HEK293 (cell line): ENCODE measurements at regions of chr5 and their contacts with region 1.

Region 1: GRCh38 chr5:140647042-140647341 is 438 bp downstream of the NDUFA2 start:
- H3K4me3 ChIP-seq: peak overlapping the region; percentile 80
- H3K27ac ChIP-seq: peak overlapping the region; percentile 60; the same call in 1 of the 2 replicates
- H3K4me1 ChIP-seq: peaks cover 2% of the 10 kb centered on the region; the same call in 1 of the 2 replicates
- CTCF ChIP-seq: no peak

Region 2: DNA sequence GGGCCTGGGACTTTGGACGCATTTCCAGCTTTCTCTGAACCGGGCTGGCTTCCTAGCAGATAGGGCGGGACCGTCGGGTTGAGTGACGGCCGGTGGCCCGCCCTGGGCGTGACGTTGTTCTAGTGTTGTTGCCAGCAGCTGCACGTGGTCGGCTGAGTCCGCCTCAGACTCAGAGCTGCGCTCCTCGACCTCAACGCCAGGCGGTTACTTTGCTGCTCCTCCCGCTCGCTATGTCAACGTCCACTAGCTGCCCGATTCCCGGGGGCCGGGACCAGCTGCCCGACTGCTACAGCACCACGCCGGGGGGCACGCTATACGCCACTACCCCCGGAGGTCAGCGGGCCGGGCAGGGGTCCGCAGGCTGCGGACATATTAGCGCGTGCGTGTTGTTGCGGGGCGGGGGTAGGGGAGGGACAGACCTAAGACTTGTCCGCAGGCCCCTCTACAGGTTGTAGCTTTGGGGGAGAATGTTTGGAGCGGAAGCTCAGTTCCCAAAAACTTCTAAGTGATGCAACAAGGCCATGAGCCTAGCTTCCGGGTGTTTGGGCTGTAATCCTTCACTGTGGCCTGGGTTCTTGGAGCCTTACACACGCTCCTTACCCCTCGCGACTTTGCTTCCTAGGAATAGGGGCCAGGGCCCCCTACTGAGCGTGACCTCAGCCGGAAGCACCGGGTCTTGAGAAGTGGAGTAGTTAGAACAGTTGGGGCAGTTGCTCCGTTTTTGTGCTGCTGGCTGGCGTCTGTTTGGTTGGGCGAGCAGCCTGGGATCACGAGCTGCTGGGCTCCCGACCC is 99.3 kb before region 1 on chr5 and contains the start of gene EIF4EBP3:
- CTCF ChIA-PET with region 1: no interaction called
- POLR2A ChIA-PET with region 1: interaction called, 11 read pairs
- H3K4me3 ChIP-seq: no peak within 1 kb of the TSS
- H3K27ac ChIP-seq: no peak within 1 kb of the TSS; the same call in 1 of the 2 replicates
- H3K4me1 ChIP-seq: no peaks in the 10 kb centered on the region
- CTCF ChIP-seq: no peak

Region 3: DNA sequence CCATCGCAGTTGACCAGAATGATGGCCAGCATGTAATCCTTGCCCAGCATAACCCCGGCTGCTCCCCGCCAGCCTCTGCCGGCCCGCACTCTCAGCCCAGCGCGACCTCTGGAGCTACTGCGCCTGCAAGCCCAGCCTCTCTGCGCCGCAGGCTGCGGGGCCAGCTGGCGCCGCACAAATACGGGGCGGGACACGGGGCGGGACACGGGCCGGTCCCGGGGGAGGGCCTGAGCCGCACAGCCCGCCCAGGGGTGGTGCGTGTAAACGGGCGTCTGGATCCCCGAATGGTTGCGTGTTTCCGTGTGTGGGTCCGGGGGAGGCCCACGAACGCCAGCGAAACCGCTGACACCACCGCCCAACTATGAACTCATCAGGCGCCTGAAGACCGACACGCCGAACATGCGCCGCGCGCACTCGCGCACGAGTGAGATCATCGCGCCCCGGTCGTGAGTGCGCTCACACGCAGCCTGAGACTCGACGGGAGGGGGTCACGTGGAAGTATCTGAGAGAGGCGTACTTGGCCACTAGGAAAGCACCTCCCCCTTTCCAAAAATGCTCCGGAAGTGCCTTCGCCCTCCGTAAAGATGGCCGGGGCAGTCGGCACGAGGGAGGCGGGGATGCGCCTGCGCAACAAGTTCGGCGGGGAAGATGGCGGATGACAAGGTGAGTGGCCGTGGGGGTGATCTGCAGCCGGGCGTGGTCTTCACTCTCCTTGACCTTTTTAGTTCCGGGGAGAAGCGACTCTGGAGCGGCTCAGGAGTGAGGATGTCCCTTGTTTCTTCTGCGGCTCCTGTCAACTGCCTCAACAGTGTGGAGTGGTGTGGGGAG is 82.6 kb before region 1 on chr5 and contains the starts of genes APBB3 and SLC35A4:
- CTCF ChIA-PET with region 1: no interaction called
- POLR2A ChIA-PET with region 1: interaction called, 13 read pairs
- H3K4me3 ChIP-seq: peak within 1 kb of the TSS; percentile 86
- H3K27ac ChIP-seq: peak within 1 kb of the TSS; percentile 44; the same call in 1 of the 2 replicates
- H3K4me1 ChIP-seq: 0 out of 2 replicates have a peak, but pooled peaks cover 3% of the 10 kb centered on the region
- CTCF ChIP-seq: no peak

Region 4: GRCh38 chr5:140658870-140659269 is 11.9 kb after region 1 on chr5:
- CTCF ChIA-PET with region 1: no interaction called
- POLR2A ChIA-PET with region 1: interaction called, 40 read pairs
- H3K4me3 ChIP-seq: no peak overlapping the region
- H3K27ac ChIP-seq: no peak overlapping the region
- H3K4me1 ChIP-seq: no peaks in the 10 kb centered on the region
- CTCF ChIP-seq: no peak

Region 5: DNA sequence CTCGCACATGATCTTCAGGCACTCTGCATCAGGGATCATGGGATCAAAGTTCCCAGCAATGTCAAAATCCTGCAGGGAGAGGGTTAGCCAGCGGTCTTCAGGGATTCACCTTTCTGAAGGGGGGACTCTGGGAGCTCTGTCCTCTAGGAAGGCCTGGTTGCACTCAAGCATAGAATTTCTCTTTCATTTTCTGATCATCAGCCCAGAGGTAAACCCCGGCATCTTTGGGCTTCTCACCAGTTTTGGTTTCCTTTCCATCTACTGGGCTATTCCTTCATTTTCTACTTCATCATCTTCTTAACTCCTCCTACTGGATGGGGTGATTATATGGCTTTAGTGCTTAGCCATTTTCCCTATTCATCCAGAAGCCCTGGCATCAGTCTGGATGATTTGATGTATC is 31.0 kb after region 1 on chr5:
- CTCF ChIA-PET with region 1: no interaction called
- POLR2A ChIA-PET with region 1: interaction called, 10 read pairs
- H3K4me3 ChIP-seq: no peak overlapping the region
- H3K27ac ChIP-seq: no peak overlapping the region
- H3K4me1 ChIP-seq: no peaks in the 10 kb centered on the region
- CTCF ChIP-seq: no peak

Region 6: GRCh38 chr5:140700177-140701144 is 53.5 kb after region 1 on chr5 and contains the start of gene ZMAT2:
- CTCF ChIA-PET with region 1: no interaction called
- POLR2A ChIA-PET with region 1: interaction called, 17 read pairs
- H3K4me3 ChIP-seq: peak within 1 kb of the TSS; percentile 59
- H3K27ac ChIP-seq: no peak within 1 kb of the TSS
- H3K4me1 ChIP-seq: 0 out of 2 replicates have a peak, but pooled peaks cover 2% of the 10 kb centered on the region
- CTCF ChIP-seq: no peak